Activated B cell treated with CpG ODN at 0.5 μM for 24 hours (primary cell): ENCODE measurements at regions of chr19 and their contacts with region 1.

Region 1: GRCh38 chr19:8654591-8655339 is 24.3 kb downstream of the NFILZ start:
- DNase-seq: peak; percentile 57
- ATAC-seq: peak; percentile 76
- H3K4me3 Mint-ChIP-seq: peak overlapping the region; percentile 50
- H3K27ac Mint-ChIP-seq: peak overlapping the region; percentile 24
- H3K4me1 Mint-ChIP-seq: peaks cover 13% of the 10 kb centered on the region
- H3K27me3 Mint-ChIP-seq: peaks cover 5% of the 10 kb centered on the region
- CTCF ChIP-seq: peak; percentile 99

Region 2: GRCh38 chr19:8697671-8698432 is 43.1 kb after region 1 on chr19:
- CTCF ChIA-PET with region 1: interaction called, 35 read pairs
- POLR2A ChIA-PET with region 1: no interaction called
- intact Hi-C with region 1: loop called (anchors 1 kb)
- DNase-seq: no peak
- ATAC-seq: no peak
- H3K4me3 Mint-ChIP-seq: no peak overlapping the region
- H3K27ac Mint-ChIP-seq: no peak overlapping the region
- H3K4me1 Mint-ChIP-seq: peaks cover 4% of the 10 kb centered on the region
- H3K27me3 Mint-ChIP-seq: peaks cover 36% of the 10 kb centered on the region
- CTCF ChIP-seq: no peak

Region 3: GRCh38 chr19:8832132-8833021 is 177.6 kb after region 1 on chr19 and contains the starts of genes MBD3L1 and ZNF558:
- CTCF ChIA-PET with region 1: no interaction called
- POLR2A ChIA-PET with region 1: no interaction called
- intact Hi-C with region 1: loop called (anchors 5 kb)
- DNase-seq: peak; percentile 99
- ATAC-seq: peak; percentile 88
- H3K4me3 Mint-ChIP-seq: peak within 1 kb of the TSS; percentile 87
- H3K27ac Mint-ChIP-seq: peak within 1 kb of the TSS; percentile 90
- H3K4me1 Mint-ChIP-seq: peaks cover 15% of the 10 kb centered on the region
- H3K27me3 Mint-ChIP-seq: no peaks in the 10 kb centered on the region
- CTCF ChIP-seq: no peak
- total RNA-seq, gene MBD3L1: not detected in 2 replicates
- total RNA-seq, gene ZNF558: 23.2 and 25.4 TPM in 2 replicates

Region 4: DNA sequence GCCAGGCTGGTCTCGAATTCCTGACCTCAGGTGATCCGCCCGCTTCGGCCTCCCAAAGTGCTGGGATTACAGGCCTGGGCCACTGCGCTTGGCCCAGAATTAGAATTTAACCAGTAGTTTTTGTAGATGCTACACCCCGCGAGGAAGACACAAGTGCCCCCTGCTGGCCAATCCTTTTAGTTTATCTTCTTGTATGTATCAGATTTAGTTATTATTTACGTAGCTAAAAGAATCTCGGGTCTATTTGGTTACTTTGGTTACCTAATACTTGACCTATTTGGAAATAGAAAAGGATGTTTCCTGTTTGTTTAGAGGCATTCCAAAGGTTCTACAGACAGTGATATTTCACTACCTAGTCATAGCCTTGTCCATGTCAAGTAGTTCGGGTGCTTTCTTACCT is 333.4 kb after region 1 on chr19:
- CTCF ChIA-PET with region 1: no interaction called
- POLR2A ChIA-PET with region 1: no interaction called
- intact Hi-C with region 1: loop called (anchors 2 kb)
- DNase-seq: no peak
- ATAC-seq: no peak
- H3K4me3 Mint-ChIP-seq: no peak overlapping the region
- H3K27ac Mint-ChIP-seq: no peak overlapping the region
- H3K4me1 Mint-ChIP-seq: no peaks in the 10 kb centered on the region
- H3K27me3 Mint-ChIP-seq: no peaks in the 10 kb centered on the region
- CTCF ChIP-seq: no peak

Region 5: DNA sequence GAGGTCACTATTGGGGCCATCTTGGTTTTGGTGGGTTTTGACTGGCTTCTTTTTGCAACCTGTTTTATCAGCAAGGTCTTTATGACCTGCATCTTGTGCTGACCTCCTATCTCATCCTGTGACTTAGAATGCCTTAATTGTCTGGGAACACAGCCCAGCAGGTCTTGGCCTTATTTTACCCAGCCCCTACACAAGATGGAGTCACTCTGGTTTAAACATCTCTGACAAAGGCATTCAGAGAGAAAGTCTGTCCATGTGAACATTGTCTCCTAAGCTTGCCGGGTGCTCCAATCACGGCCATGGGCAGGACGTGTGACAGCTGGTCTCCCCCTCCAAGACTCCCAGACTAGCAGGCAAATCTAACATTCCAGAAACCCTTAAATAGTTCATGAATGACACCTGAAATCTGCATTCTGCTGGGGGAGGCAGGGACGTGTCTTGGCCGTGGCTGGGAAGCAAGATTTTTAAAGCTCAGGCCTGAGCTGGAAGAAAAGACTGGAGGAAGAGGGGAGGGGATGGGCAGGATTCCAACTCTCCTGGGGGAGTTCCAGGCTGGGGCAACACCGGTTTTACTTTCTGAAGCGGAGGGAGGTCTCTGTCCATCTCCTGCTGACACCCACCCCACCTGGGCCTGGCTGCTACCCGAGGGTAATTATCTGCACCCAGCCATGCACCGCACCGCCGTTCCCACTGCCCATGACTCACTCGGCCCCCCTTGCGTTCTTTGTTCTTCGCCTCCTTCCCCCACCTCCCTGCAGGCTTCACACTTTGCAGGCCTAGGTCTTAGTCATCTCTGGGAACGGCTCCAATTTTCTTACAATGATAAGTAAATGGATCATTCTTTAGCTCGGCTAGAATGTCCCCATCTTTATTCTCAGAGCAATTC is 420.5 kb after region 1 on chr19:
- CTCF ChIA-PET with region 1: interaction called, 3 read pairs
- POLR2A ChIA-PET with region 1: no interaction called
- intact Hi-C with region 1: loop called (anchors 1 kb)
- DNase-seq: no peak
- ATAC-seq: no peak
- H3K4me3 Mint-ChIP-seq: no peak overlapping the region
- H3K27ac Mint-ChIP-seq: no peak overlapping the region
- H3K4me1 Mint-ChIP-seq: no peaks in the 10 kb centered on the region
- H3K27me3 Mint-ChIP-seq: no peaks in the 10 kb centered on the region
- CTCF ChIP-seq: no peak